HAP-1 (cell line): ENCODE measurements at regions of chr6 and their contacts with region 1.

Region 1: GRCh38 chr6:119110601-119111548 is 32.4 kb upstream of the FAM184A start:
- DNase-seq: peak; percentile 68 to 69
- H3K4me3 ChIP-seq: no peak overlapping the region
- H3K4me1 ChIP-seq: peaks cover 6% of the 10 kb centered on the region
- H3K27me3 ChIP-seq: no peaks in the 10 kb centered on the region

Region 2: DNA sequence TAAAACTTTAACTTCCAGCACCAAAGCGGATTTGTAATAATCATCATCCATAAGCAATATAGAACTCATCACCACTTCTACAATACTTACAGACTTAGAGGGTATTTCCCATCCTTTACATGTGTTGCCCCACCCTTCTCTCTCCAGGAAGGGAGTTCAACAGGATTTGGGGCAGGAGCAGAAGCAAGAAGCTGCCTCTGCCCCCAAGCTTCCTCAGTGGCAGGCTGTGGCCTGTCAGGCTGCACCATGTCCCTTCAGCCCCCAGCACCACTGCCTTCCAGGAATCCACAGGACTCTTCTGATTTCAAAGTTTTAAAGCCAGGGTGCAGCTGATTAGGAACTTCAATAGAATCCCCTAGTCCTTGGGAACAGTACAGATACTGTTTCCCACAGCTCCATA is 139.2 kb before region 1 on chr6:
- in situ Hi-C with region 1: loop called (anchors 10 kb)
- DNase-seq: no peak
- H3K4me3 ChIP-seq: no peak overlapping the region
- H3K4me1 ChIP-seq: peaks cover 11% of the 10 kb centered on the region
- H3K27me3 ChIP-seq: no peaks in the 10 kb centered on the region